Activated CD4-positive, alpha-beta T cell treated with anti-CD3 and anti-CD28 coated beads for 36 hours (primary cell): ENCODE measurements at regions of chr4 and their contacts with region 1.

Region 1: DNA sequence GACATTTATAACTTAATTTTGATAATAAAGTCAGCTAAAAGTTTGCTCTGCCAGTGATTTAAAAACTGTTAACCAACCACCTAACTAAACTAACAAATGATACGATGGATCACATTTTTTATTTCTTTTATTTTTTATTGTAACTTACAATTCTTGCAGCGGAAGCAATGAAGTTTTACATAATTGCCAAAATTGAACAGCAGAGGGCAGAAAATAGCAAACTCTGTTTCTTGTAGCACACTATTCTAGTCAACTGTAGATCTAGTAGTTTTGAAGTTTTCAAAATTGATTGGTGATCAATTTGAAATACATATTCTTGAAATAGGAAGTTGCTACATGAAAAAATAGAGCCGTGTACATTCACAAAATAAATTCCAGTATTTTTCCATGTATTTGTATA is 2.8 kb upstream of the GRIA2 start:
- DNase-seq: no peak
- ATAC-seq: no peak
- H3K4me3 Mint-ChIP-seq: no peak overlapping the region
- H3K27ac Mint-ChIP-seq: no peak overlapping the region
- H3K4me1 Mint-ChIP-seq: no peaks in the 10 kb centered on the region
- H3K27me3 Mint-ChIP-seq: peaks cover 21% of the 10 kb centered on the region

Region 2: GRCh38 chr4:157779081-157779480 is 561.4 kb after region 1 on chr4:
- CTCF ChIA-PET with region 1: no interaction called
- POLR2A ChIA-PET with region 1: no interaction called
- intact Hi-C with region 1: no loop called
- DNase-seq: no peak
- ATAC-seq: no peak
- H3K4me3 Mint-ChIP-seq: no peak overlapping the region
- H3K27ac Mint-ChIP-seq: no peak overlapping the region
- H3K4me1 Mint-ChIP-seq: no peaks in the 10 kb centered on the region
- H3K27me3 Mint-ChIP-seq: no peaks in the 10 kb centered on the region

Region 3: DNA sequence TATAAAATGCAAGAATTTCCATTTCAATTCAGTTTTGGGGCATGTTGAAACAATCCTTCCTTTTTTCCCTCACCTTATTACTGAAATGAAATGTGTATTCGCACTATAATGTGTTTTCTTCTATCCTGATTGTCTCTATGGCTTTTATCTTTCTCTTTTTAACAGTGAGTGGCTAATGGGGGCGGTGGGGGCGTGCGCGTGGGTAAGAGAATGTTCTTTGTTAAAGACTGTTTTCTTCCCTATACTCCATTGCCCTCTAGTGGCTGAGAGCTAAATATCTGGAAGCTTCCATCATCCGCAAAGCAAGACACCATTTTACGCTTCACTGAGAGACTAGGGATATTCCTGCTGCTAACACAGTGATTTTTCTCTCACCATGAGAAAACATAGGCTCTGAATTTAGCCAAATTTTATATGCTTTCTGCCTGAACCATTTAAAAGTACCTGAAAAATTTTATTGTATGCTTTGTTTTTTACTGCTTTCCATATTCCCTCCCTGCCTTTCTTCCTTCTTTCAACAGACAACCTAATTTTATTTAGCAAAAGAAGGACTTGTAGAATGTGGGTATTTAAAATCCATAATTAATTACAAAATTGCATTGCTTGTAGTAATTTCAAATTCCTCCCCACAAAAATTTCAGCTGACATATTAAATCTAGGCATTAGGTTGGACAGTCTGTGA is 761.1 kb after region 1 on chr4:
- CTCF ChIA-PET with region 1: interaction called, 3 read pairs
- POLR2A ChIA-PET with region 1: no interaction called
- intact Hi-C with region 1: loop called (anchors 1 to 5 kb)
- DNase-seq: peak; percentile 38
- ATAC-seq: peak; percentile 70
- H3K4me3 Mint-ChIP-seq: no peak overlapping the region
- H3K27ac Mint-ChIP-seq: no peak overlapping the region
- H3K4me1 Mint-ChIP-seq: peaks cover 4% of the 10 kb centered on the region
- H3K27me3 Mint-ChIP-seq: peaks cover 7% of the 10 kb centered on the region